H1 (cell line): ENCODE measurements at regions of chr17 and their contacts with region 1.

Region 1: GRCh38 chr17:4241539-4241938 is 22.2 kb downstream of the ANKFY1 start:
- DNase-seq: no peak
- H3K4me3 ChIP-seq: no peak overlapping the region
- H3K27ac ChIP-seq: no peak overlapping the region
- H3K4me1 ChIP-seq: no peaks in the 10 kb centered on the region; a peak in 1 of 7 replicates
- H3K27me3 ChIP-seq: no peaks in the 10 kb centered on the region
- CTCF ChIP-seq: no peak
- EP300 ChIP-seq: no peak
- POLR2A ChIP-seq: no peak
- RAD21 ChIP-seq: no peak

Region 2: DNA sequence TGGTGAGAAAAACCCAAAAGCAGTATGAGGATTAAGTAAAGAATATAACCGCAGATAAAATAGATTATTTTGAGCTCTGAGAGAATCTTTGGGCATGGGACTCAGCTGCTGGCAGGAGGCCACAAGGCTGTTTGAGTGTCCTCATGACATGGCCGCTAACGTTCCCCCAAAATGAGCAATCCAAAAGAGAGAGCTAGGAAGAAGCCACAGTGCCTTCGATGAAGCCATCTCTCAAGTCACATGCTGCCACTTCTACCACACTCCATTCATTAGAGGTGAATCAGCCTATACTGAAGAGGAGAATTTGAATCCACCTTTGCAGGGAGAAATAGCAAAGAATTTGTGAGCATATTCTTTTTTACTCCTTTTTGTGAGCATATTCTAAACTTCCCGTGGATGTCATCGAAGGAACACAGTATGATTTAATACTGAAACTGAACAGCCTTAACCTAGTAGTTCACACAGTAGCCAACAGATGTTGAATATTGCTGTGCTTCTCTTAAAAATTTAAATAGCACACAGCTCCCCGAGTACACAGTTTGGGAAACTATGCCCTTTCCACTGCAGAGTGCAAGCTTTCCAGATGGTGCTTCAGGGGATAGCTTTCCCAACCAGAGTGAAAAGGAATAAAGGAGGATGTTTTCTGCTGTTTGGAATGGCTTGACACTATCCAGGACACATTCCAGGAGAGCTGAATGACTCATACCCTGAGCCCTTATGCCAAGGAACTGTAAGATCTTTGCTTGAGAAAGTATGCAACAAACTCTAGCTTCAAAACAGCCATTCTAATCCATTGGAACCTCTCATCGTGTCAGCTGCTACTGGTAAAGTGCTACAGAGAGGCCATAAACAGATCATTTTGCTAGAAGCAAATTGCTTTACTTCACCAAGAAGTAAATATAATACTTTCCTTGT is 11.7 kb before region 1 on chr17:
- CTCF ChIA-PET with region 1: interaction called, 15 read pairs
- POLR2A ChIA-PET with region 1: interaction called, 3 read pairs
- DNase-seq: no peak
- H3K4me3 ChIP-seq: no peak overlapping the region
- H3K27ac ChIP-seq: no peak overlapping the region
- H3K4me1 ChIP-seq: no peaks in the 10 kb centered on the region
- H3K27me3 ChIP-seq: no peaks in the 10 kb centered on the region
- CTCF ChIP-seq: no peak
- EP300 ChIP-seq: no peak
- POLR2A ChIP-seq: no peak
- RAD21 ChIP-seq: no peak

Region 3: GRCh38 chr17:4327638-4328037 is 86.1 kb after region 1 on chr17:
- CTCF ChIA-PET with region 1: no interaction called
- POLR2A ChIA-PET with region 1: no interaction called
- DNase-seq: no peak
- H3K4me3 ChIP-seq: no peak overlapping the region
- H3K27ac ChIP-seq: no peak overlapping the region
- H3K4me1 ChIP-seq: peaks cover under 1 to 8% (median 2%) of the 10 kb centered on the region in 4 experiments; a peak in 5 of 7 replicates
- H3K27me3 ChIP-seq: no peaks in the 10 kb centered on the region; a peak in 1 of 7 replicates
- CTCF ChIP-seq: no peak
- EP300 ChIP-seq: no peak
- POLR2A ChIP-seq: no peak
- RAD21 ChIP-seq: no peak